Dorsolateral prefrontal cortex (tissue), 120 donors: ENCODE measurements at regions of chr2 and their contacts with region 1.

Region 1: GRCh38 chr2:25071966-25072365 is 30.1 kb downstream of the EFR3B start:
- DNase-seq: peak in 9 of 10 donors; percentile 34 to 83 (median 64)
- H3K4me3 ChIP-seq: no peak overlapping the region
- H3K27ac ChIP-seq: peak overlapping the region in 38 of 59 donors; percentile 4 to 77 (median 52)
- H3K27me3 ChIP-seq: no peaks in the 10 kb centered on the region
- CTCF ChIP-seq: no peak

Region 2: DNA sequence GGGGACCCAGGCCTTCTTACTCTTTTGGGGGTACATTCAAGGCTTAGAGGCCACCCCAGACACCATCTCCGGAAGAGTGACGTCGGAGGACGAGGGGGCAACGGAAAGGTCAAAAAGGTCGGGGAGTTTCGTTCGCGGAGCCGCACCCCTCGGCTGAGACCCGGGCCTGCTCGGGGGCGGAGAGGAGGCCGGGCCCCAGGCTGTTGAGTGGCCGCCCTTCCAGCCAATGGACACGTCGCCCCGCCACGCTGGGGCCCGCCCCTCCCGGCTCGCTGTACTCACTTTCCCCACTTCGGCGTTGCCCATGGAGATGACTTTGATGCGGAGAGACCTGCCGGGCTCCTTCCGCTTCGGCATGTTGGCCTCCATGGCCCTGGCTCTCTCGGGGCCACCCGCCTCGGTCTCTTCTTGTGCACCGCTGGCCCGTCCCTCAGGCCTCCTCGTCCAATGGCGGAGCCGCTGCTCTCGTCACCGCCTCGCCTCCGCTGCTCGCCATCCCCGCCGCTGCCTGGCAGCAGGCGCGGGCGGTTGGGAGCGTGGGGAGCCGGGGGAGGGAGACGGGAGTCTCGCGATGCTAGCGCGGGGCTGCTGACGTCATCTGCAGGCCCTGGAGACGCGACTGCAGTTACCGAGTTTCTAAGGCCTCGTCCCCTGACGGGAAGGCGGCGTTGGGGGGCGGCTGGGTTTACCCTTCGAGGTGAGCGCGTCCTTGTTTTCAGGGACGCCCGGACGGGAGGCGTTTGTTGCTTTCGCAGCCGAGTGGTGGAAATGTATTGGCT is 100.2 kb before region 1 on chr2 and contains the start of gene DNAJC27:
- intact Hi-C with region 1: no loop called
- DNase-seq: peak; percentile 95 to 99 (median 98)
- H3K4me3 ChIP-seq: peak within 1 kb of the TSS; percentile 61 to 98 (median 91)
- H3K27ac ChIP-seq: peak within 1 kb of the TSS; percentile 96 to 100 (median 99)
- H3K27me3 ChIP-seq: no peaks in the 10 kb centered on the region
- CTCF ChIP-seq: peak in 26 of 56 donors; percentile 4 to 45 (median 18)
- total RNA-seq, gene DNAJC27: 10.6 to 31.2 (median 20.7) TPM

Region 3: GRCh38 chr2:25112113-25112512 is 40.1 kb after region 1 on chr2:
- intact Hi-C with region 1: loop called in 1 of 2 experiments (anchors 5 kb)
- DNase-seq: no peak
- H3K4me3 ChIP-seq: no peak overlapping the region
- H3K27ac ChIP-seq: no peak overlapping the region
- H3K27me3 ChIP-seq: no peaks in the 10 kb centered on the region
- CTCF ChIP-seq: no peak